HEK293 (cell line): ENCODE measurements at regions of chr13 and their contacts with region 1.

Region 1: DNA sequence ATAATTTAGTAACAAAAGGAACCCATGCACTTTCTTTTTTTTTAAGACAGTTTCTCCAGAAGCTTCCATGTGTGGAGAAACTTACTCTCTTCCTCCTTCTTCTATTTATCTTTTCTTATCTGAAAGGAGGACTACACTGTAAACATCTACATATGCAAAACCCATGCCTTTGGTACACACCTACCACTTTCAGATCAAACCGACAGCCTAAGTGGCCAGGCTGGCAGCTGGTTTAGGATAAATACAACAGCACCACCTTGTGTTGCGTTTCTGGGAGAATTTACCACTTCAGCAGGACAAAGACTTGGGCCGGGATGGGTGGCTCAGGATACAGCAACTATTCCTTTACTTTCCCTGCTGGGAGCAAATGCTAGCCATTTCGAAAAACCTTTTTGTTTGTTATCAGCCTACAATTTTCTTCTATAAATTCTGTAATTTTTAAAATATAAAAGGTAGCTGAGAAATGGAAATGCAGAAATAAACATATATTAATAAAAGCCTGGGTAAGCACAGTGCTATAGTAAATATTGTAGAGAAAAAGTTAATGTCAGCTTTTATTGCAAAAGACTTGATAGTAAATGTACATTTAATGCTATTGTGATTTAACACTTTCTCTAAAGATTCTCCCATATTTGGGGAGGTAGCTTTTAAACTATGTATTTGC is 94.0 kb upstream of the RFC3 start:
- H3K4me3 ChIP-seq: no peak overlapping the region
- H3K27ac ChIP-seq: no peak overlapping the region
- H3K4me1 ChIP-seq: no peaks in the 10 kb centered on the region
- CTCF ChIP-seq: peak; percentile 75

Region 2: GRCh38 chr13:33542283-33543088 is 181.4 kb before region 1 on chr13:
- CTCF ChIA-PET with region 1: interaction called, 10 read pairs
- POLR2A ChIA-PET with region 1: no interaction called
- H3K4me3 ChIP-seq: peak overlapping the region; percentile 37
- H3K27ac ChIP-seq: peak overlapping the region; percentile 99
- H3K4me1 ChIP-seq: peaks cover 3% of the 10 kb centered on the region
- CTCF ChIP-seq: peak; percentile 99

Region 3: DNA sequence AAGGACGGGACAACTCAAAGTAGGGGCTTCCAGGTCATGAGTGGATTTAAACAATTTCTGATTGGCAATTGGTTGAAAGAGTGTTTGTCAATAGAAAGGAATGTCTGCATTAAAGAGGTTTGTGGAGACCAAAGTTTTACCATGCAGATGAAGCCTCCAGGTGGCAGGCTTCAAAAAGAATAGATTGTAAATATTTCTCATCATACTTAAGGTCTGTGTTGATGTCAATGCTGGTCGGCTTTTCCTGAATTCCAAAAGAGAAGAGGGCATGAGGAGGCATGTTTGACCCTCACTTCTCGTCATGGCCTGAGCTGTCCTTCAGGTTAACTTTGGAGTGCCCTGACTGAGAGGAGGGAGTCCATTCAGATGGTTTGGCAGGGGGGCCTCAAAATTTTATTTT is 31.4 kb before region 1 on chr13:
- CTCF ChIA-PET with region 1: no interaction called
- POLR2A ChIA-PET with region 1: no interaction called
- H3K4me3 ChIP-seq: no peak overlapping the region
- H3K27ac ChIP-seq: no peak overlapping the region
- H3K4me1 ChIP-seq: no peaks in the 10 kb centered on the region
- CTCF ChIP-seq: no peak